CD8-positive, alpha-beta T cell (primary cell): ENCODE measurements at regions of chr11 and their contacts with region 1.

Region 1: DNA sequence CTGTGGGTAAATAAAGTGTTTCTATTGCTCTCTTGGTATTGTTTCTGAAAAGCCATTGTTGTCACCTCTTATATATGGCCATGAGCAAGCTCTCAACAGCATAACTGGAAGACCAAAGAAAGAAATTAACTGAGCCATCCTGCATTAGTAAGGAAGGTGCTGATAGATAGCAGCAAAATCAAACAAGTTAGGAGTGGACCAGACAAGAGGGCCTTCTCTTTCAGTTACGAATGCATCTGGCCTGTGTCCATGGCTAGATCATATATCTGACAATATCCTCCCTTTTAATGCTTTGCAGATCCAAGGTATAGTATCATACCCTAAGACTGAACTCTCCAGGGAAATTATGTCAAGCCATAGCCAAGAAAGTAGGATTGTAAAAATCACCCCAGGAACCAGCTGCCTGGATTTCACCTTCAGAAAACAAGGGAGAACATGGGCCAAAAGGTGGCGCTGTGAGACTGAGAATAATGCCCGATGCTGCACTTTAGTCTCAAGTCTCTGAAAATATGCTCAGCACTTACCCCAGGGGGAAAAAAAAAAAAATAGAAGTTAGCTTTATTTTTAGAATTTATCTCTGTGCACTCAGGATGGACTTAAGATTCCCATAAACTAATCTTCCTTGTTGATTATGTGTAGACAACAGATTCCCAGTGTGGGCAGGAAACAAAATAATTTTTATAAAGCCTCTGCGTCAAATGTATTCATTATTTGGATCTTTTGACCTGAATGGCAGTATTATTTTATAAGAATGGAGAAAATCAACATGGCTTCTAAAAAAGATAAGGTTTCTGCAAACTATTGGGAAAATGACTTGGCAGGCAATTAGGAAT is 415.1 kb downstream of the ETS1 start:
- DNase-seq: peak; percentile 76 to 91 (median 86)
- ATAC-seq: peak; percentile 89
- H3K4me3 ChIP-seq: no peak overlapping the region
- H3K4me3 Mint-ChIP-seq: no peak overlapping the region
- H3K27ac ChIP-seq: no peak overlapping the region
- H3K27ac Mint-ChIP-seq: no peak overlapping the region
- H3K4me1 ChIP-seq: no peaks in the 10 kb centered on the region
- H3K4me1 Mint-ChIP-seq: peaks cover 3% of the 10 kb centered on the region
- H3K27me3 ChIP-seq: no peaks in the 10 kb centered on the region
- H3K27me3 Mint-ChIP-seq: no peaks in the 10 kb centered on the region
- CTCF ChIP-seq: peak; percentile 88

Region 2: GRCh38 chr11:128069665-128070064 is 102.6 kb before region 1 on chr11:
- CTCF ChIA-PET with region 1: no interaction called
- POLR2A ChIA-PET with region 1: no interaction called
- intact Hi-C with region 1: no loop called
- DNase-seq: no peak
- ATAC-seq: no peak
- H3K4me3 ChIP-seq: no peak overlapping the region
- H3K4me3 Mint-ChIP-seq: no peak overlapping the region
- H3K27ac ChIP-seq: no peak overlapping the region
- H3K27ac Mint-ChIP-seq: no peak overlapping the region
- H3K4me1 ChIP-seq: no peaks in the 10 kb centered on the region
- H3K4me1 Mint-ChIP-seq: peaks cover 5% of the 10 kb centered on the region
- H3K27me3 ChIP-seq: no peaks in the 10 kb centered on the region
- H3K27me3 Mint-ChIP-seq: no peaks in the 10 kb centered on the region
- CTCF ChIP-seq: no peak

Region 3: DNA sequence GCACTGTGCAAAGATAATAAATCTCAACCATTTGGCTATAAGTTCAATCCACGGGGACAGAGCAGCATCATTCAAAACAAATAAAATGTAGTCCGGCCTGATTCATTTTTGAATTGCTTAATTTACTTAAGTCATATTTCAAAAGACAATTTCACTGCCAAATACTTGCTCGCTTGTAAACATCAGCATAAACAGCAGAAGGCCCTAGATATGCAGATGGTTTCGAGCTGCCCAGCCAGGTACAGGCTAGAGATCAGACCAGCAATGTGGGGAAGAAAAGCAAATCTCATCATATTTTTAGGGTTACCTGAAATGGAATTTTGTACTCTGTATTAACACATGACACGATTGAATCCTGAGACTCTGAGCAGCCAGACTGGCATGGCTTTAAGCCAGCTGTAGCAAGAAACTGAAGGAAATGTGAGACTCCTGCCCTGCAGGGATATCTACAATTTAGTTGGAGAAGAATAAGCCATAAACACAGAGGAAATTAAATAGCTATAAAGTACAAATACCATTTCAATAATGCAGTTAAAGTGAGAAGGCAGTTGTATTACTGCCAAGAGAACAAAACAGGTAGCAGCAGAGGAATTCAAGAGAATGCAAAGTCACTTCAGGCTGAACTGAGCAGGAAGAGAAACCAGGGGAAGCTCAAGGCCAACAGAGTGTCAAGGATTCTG is 25.2 kb before region 1 on chr11:
- CTCF ChIA-PET with region 1: interaction called, 12 read pairs
- POLR2A ChIA-PET with region 1: no interaction called
- intact Hi-C with region 1: no loop called
- DNase-seq: no peak
- ATAC-seq: no peak
- H3K4me3 ChIP-seq: no peak overlapping the region
- H3K4me3 Mint-ChIP-seq: no peak overlapping the region
- H3K27ac ChIP-seq: no peak overlapping the region
- H3K27ac Mint-ChIP-seq: no peak overlapping the region
- H3K4me1 ChIP-seq: no peaks in the 10 kb centered on the region
- H3K4me1 Mint-ChIP-seq: no peaks in the 10 kb centered on the region
- H3K27me3 ChIP-seq: no peaks in the 10 kb centered on the region
- H3K27me3 Mint-ChIP-seq: no peaks in the 10 kb centered on the region
- CTCF ChIP-seq: no peak

Region 4: GRCh38 chr11:128506999-128507611 is 334.8 kb after region 1 on chr11:
- CTCF ChIA-PET with region 1: interaction called, 4 read pairs
- POLR2A ChIA-PET with region 1: no interaction called
- intact Hi-C with region 1: loop called in 1 of 2 experiments (anchors 5 kb)
- DNase-seq: peak in 4 of 9 experiments; percentile 51 to 65 (median 60)
- ATAC-seq: peak; percentile 30
- H3K4me3 ChIP-seq: peak overlapping the region; percentile 37 to 94
- H3K4me3 Mint-ChIP-seq: peak overlapping the region; percentile 84
- H3K27ac ChIP-seq: peak overlapping the region; percentile 48 to 75
- H3K27ac Mint-ChIP-seq: peak overlapping the region; percentile 98
- H3K4me1 ChIP-seq: peaks cover 100% of the 10 kb centered on the region
- H3K4me1 Mint-ChIP-seq: peaks cover 97% of the 10 kb centered on the region
- H3K27me3 ChIP-seq: no peaks in the 10 kb centered on the region
- H3K27me3 Mint-ChIP-seq: no peaks in the 10 kb centered on the region
- CTCF ChIP-seq: no peak

Region 5: GRCh38 chr11:128776424-128777284 is 604.4 kb after region 1 on chr11:
- CTCF ChIA-PET with region 1: interaction called, 22 read pairs
- POLR2A ChIA-PET with region 1: no interaction called
- intact Hi-C with region 1: loop called (anchors 1 kb)
- DNase-seq: peak in 6 of 9 experiments; percentile 27 to 79 (median 50)
- ATAC-seq: peak; percentile 57
- H3K4me3 ChIP-seq: no peak overlapping the region
- H3K4me3 Mint-ChIP-seq: no peak overlapping the region
- H3K27ac ChIP-seq: peak overlapping the region in 1 of 2 experiments; percentile 53
- H3K27ac Mint-ChIP-seq: peak overlapping the region; percentile 75
- H3K4me1 ChIP-seq: peaks cover 32% of the 10 kb centered on the region
- H3K4me1 Mint-ChIP-seq: peaks cover 71% of the 10 kb centered on the region
- H3K27me3 ChIP-seq: no peaks in the 10 kb centered on the region
- H3K27me3 Mint-ChIP-seq: no peaks in the 10 kb centered on the region
- CTCF ChIP-seq: peak; percentile 37

Region 6: GRCh38 chr11:128956401-128957201 is 784.3 kb after region 1 on chr11:
- CTCF ChIA-PET with region 1: interaction called, 6 read pairs
- POLR2A ChIA-PET with region 1: no interaction called
- intact Hi-C with region 1: loop called (anchors 2 to 5 kb)
- DNase-seq: peak in 3 of 9 experiments; percentile 12 to 66 (median 59)
- ATAC-seq: no peak
- H3K4me3 ChIP-seq: no peak overlapping the region
- H3K4me3 Mint-ChIP-seq: no peak overlapping the region
- H3K27ac ChIP-seq: no peak overlapping the region
- H3K27ac Mint-ChIP-seq: no peak overlapping the region
- H3K4me1 ChIP-seq: no peaks in the 10 kb centered on the region
- H3K4me1 Mint-ChIP-seq: peaks cover 2% of the 10 kb centered on the region
- H3K27me3 ChIP-seq: no peaks in the 10 kb centered on the region
- H3K27me3 Mint-ChIP-seq: peaks cover 8% of the 10 kb centered on the region
- CTCF ChIP-seq: peak; percentile 70